Dorsolateral prefrontal cortex (tissue), 120 donors: ENCODE measurements at regions of chr1 and their contacts with region 1.

Region 1: DNA sequence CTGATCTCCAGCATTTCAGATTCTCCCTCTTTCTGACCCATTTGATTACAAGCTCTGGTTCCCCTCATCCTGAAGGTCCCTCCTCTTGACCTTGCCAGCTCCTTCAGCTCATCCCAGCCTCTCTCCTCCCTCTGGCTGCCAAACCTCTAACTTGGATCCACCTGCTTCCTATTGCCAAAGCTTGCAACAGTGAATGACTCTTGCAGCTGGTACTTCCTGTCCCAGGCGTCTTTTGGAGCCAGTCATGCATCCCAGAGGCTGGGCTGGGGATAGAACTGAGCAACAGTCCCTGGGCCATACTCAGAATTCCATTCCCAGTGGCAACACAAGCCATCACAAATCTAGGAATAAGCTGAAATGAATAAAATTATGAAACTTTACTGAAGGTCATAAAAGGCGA is 27.7 kb upstream of the SPOCD1 start:
- DNase-seq: peak in 6 of 10 donors; percentile 32 to 59 (median 50)
- H3K4me3 ChIP-seq: peak overlapping the region in 4 of 59 donors; percentile 14 to 30 (median 20)
- H3K27ac ChIP-seq: peak overlapping the region; percentile 60 to 100 (median 99)
- H3K27me3 ChIP-seq: no peaks in the 10 kb centered on the region
- CTCF ChIP-seq: no peak

Region 2: DNA sequence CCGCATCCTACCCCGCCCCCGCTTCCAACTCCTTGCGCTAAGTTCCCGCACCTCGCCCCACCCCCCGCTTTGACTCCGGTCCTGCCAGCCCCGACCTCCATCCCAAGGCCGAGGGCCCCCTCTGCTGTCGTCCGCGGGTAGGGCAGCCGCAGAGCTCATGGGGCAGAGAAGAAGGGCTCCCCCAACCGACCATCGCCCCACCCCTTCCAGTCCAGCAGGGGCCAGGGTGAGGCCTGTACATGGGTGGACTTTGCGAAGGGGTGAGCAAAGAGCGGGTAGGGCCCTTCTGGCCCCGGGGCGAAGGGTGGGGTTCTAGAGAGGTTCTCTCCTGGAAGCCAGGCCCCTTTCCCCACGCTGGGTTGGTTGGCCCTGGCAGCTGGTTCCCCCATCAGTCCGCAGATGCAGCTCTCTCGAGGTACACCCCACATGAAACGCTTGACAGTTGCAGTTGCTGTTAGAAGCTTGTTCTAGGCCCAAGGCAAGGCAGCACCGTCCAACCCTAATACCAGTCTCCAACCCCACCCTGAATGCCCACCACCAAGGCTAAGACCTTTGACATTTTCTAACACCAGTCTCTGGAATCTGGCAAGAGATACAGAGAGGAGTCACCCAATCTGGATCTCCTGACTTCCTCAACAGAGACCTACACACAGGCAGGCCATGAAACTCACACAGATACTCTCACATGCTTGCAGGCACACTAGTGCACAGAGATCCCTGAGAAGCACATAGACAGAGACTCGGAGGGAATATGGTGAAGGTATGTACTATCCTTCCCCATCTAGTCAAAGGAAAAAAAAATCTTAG is 54.0 kb before region 1 on chr1:
- intact Hi-C with region 1: no loop called
- DNase-seq: peak; percentile 94 to 99 (median 95)
- H3K4me3 ChIP-seq: peak overlapping the region; percentile 57 to 91 (median 77)
- H3K27ac ChIP-seq: peak overlapping the region; percentile 14 to 99 (median 96)
- H3K27me3 ChIP-seq: no peaks in the 10 kb centered on the region
- CTCF ChIP-seq: peak; percentile 61 to 96 (median 89)

Region 3: GRCh38 chr1:31811583-31811982 is 31.9 kb before region 1 on chr1:
- intact Hi-C with region 1: loop called in 1 of 2 experiments (anchors 1 kb)
- DNase-seq: peak; percentile 44 to 94 (median 90)
- H3K4me3 ChIP-seq: peak overlapping the region in 20 of 59 donors; percentile 2 to 40 (median 20)
- H3K27ac ChIP-seq: peak overlapping the region; percentile 74 to 99 (median 93)
- H3K27me3 ChIP-seq: no peaks in the 10 kb centered on the region
- CTCF ChIP-seq: peak in 4 of 56 donors; percentile 10 to 23 (median 13)

Region 4: GRCh38 chr1:31822766-31823165 is 20.7 kb before region 1 on chr1:
- intact Hi-C with region 1: loop called in 1 of 2 experiments (anchors 2 kb)
- DNase-seq: peak in 5 of 10 donors; percentile 38 to 78 (median 76)
- H3K4me3 ChIP-seq: no peak overlapping the region
- H3K27ac ChIP-seq: peak overlapping the region; percentile 42 to 98 (median 90)
- H3K27me3 ChIP-seq: no peaks in the 10 kb centered on the region
- CTCF ChIP-seq: peak in 22 of 56 donors; percentile 7 to 57 (median 26)

Region 5: GRCh38 chr1:31938174-31938950 is 94.9 kb after region 1 on chr1 and contains the start of gene PTP4A2:
- intact Hi-C with region 1: loop called (anchors 1 kb)
- DNase-seq: peak; percentile 81 to 94 (median 90)
- H3K4me3 ChIP-seq: peak within 1 kb of the TSS; percentile 51 to 91 (median 76)
- H3K27ac ChIP-seq: peak within 1 kb of the TSS; percentile 78 to 98 (median 91)
- H3K27me3 ChIP-seq: no peaks in the 10 kb centered on the region
- CTCF ChIP-seq: peak in 44 of 56 donors; percentile 7 to 82 (median 51)
- total RNA-seq, gene PTP4A2: 185 to 784 (median 393) TPM